Right lobe of liver (tissue), 6 donors: ENCODE measurements at regions of chr9 and their contacts with region 1.

Region 1: GRCh38 chr9:69549310-69550202 is 122.6 kb downstream of the APBA1 start:
- DNase-seq: no peak
- ATAC-seq: peak; percentile 81 to 87 (median 84)
- H3K4me3 ChIP-seq: no peak overlapping the region
- H3K27ac ChIP-seq: no peak overlapping the region
- H3K4me1 ChIP-seq: no peaks in the 10 kb centered on the region
- H3K27me3 ChIP-seq: no peaks in the 10 kb centered on the region
- CTCF ChIP-seq: peak; percentile 81 to 90 (median 84)
- POLR2A ChIP-seq: no peak

Region 2: GRCh38 chr9:69056191-69056815 is 493.3 kb before region 1 on chr9:
- intact Hi-C with region 1: no loop called
- DNase-seq: no peak
- ATAC-seq: no peak
- H3K4me3 ChIP-seq: no peak overlapping the region
- H3K27ac ChIP-seq: no peak overlapping the region
- H3K4me1 ChIP-seq: no peaks in the 10 kb centered on the region
- H3K27me3 ChIP-seq: no peaks in the 10 kb centered on the region
- CTCF ChIP-seq: no peak
- POLR2A ChIP-seq: no peak

Region 3: GRCh38 chr9:69421908-69422801 is 127.4 kb before region 1 on chr9:
- intact Hi-C with region 1: loop called (anchors 5 kb)
- DNase-seq: peak in 2 of 3 donors; percentile 40 to 68
- ATAC-seq: peak; percentile 90 to 98 (median 96)
- H3K4me3 ChIP-seq: no peak overlapping the region
- H3K27ac ChIP-seq: no peak overlapping the region
- H3K4me1 ChIP-seq: no peaks in the 10 kb centered on the region
- H3K27me3 ChIP-seq: no peaks in the 10 kb centered on the region
- CTCF ChIP-seq: peak; percentile 71 to 87 (median 76)
- POLR2A ChIP-seq: no peak

Region 4: DNA sequence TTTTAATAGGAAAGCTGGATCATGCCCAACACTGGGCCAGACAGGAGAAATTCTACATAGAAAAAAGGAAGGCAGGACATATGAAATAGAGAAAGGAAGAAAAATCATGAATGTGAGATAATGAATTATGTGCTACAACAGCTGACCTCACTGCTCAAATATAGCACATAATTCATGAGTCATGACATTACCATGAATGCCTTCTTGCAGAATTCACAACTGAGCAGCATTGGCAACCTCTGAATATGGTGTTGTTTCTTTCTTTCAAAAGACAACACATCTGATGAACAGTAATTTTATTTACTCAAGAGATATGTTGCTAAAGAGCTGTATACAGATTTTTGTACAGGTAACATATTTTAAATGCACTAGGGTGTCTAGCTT is 88.3 kb after region 1 on chr9:
- intact Hi-C with region 1: no loop called
- DNase-seq: no peak
- ATAC-seq: peak in 1 of 4 donors; percentile 50
- H3K4me3 ChIP-seq: no peak overlapping the region
- H3K27ac ChIP-seq: no peak overlapping the region
- H3K4me1 ChIP-seq: peaks cover 0 to 1% (median 0%) of the 10 kb centered on the region in 4 donors
- H3K27me3 ChIP-seq: no peaks in the 10 kb centered on the region
- CTCF ChIP-seq: no peak
- POLR2A ChIP-seq: no peak